ENCODE measurements at regions of chr5 and their contacts with region 1.

Region 1: DNA sequence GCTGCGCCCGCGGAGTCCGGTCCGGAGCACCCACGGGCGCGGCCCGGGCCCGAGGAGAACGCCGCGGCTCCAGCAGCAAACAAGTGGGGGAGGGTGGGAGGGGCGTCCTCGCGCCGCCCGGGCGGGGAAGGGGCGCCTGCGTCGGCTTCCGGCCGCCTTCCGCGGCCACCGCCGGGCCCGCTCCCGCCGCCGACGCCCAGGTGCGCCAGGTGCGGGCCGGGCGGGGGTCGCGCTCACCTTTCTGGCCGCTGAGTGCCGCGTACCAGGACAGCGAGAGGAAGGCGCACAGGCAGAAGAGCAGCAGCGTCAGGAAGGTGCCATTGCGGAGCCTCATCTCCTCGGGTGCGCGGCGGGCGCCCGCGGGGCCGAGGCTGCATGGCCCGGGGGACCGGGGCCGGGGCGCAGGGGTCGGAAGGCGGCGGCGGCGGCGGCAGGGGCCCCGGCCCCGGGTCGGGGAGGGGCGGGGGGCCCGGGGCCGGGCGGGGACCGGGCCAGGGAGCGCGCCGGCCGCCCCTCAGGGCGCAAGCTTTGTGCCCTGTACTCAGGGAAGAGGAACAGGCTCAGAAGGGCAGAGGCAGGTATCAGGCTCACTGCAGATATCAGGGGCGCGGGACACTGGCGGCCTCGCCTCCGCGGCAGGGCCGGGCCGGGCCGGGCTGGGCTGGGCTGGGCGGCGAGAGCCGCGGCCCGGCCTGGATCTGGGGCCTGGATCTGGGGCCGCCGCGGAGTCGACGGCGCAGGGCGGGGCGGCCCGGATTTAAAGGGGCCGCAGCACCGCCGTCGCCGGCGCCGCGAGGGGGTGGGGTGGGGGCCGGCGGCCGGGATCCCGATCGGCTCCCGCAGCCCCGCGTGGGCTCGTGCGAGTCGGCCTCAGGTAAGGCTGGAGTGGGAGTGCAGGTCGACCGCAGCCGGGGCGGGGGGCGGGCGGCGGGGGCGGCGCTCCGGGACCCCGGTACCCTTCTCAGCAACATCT is at the start of gene MGAT4B:
- DNase-seq: peak in 2 of 3 donors; percentile 44 to 50
- H3K4me3 ChIP-seq: peak within 1 kb of the TSS; percentile 56 to 80 (median 59)
- H3K4me3 Mint-ChIP-seq: peak within 1 kb of the TSS; percentile 85 to 88
- H3K27ac ChIP-seq: peak within 1 kb of the TSS; percentile 56 to 77
- H3K27ac Mint-ChIP-seq: peak within 1 kb of the TSS in 6 of 7 donors; percentile 53 to 83 (median 77)
- H3K4me1 ChIP-seq: peaks cover 41 to 61% of the 10 kb centered on the region in 2 donors
- H3K4me1 Mint-ChIP-seq: peaks cover 36% of the 10 kb centered on the region
- H3K27me3 ChIP-seq: no peaks in the 10 kb centered on the region
- H3K27me3 Mint-ChIP-seq: peaks cover 0 to 2% (median 0%) of the 10 kb centered on the region in 3 donors
- CTCF ChIP-seq: no peak
- polyA plus RNA-seq, gene MGAT4B: 12.4 to 151 (median 14.3) TPM

Region 2: GRCh38 chr5:179732417-179732917 is 74.1 kb before region 1 on chr5 and contains the start of gene MAML1:
- intact Hi-C with region 1: no loop called
- DNase-seq: peak; percentile 99 to 100 (median 100)
- H3K4me3 ChIP-seq: peak within 1 kb of the TSS; percentile 69 to 90 (median 70)
- H3K4me3 Mint-ChIP-seq: peak within 1 kb of the TSS; percentile 92 to 96
- H3K27ac ChIP-seq: peak within 1 kb of the TSS; percentile 97 to 98
- H3K27ac Mint-ChIP-seq: peak within 1 kb of the TSS; percentile 95 to 99 (median 97)
- H3K4me1 ChIP-seq: peaks cover 39 to 60% of the 10 kb centered on the region in 2 donors
- H3K4me1 Mint-ChIP-seq: peaks cover 58% of the 10 kb centered on the region
- H3K27me3 ChIP-seq: no peaks in the 10 kb centered on the region
- H3K27me3 Mint-ChIP-seq: no peaks in the 10 kb centered on the region
- CTCF ChIP-seq: no peak
- polyA plus RNA-seq, gene MAML1: 2.2 to 11.0 (median 2.7) TPM

Region 3: DNA sequence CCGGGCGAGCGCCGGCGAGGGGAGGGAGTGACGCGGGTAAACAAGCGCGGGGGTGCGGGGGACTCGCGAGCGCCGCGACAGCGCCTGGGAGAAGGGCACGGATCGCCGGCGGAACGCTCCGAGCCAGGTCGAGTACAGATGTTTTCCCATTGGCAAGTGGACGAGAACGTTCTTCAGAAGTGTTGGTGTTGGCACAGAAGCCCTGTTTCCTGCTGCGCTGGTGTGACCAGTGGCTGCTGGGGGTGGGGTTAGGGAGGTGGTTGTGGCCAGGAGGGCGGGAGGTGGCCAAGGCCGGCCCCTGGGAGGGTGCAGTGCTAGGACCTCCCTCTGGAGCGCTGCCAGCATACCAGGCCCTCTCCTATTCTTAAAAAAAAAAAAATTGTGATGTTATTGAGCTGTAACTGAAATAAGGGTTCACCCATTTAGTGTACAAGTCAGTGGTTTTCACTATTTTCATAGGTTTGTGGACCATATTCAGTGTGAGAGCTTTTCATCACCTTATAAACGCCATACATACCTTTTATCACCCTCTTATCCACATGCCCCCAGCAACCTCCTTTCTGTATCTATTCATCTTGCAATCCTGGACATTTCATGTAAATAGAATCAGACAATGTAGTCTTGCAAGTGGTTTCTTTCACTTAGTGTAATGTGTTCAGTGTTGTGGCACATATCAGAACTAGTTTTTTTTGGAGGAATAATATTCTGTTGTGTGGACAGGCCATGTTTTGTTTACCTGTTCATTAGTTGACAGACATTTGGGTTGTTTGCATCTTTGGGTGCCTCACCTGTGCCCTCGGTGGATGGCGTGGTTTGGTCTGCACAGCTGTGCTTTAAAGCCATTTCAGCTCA is 15.3 kb after region 1 on chr5:
- intact Hi-C with region 1: loop called (anchors 2 kb)
- DNase-seq: peak; percentile 79 to 90 (median 86)
- H3K4me3 ChIP-seq: peak overlapping the region; percentile 87 to 99 (median 87)
- H3K4me3 Mint-ChIP-seq: peak overlapping the region; percentile 93 to 94
- H3K27ac ChIP-seq: peak overlapping the region; percentile 90 to 98
- H3K27ac Mint-ChIP-seq: peak overlapping the region; percentile 96 to 99 (median 98)
- H3K4me1 ChIP-seq: peaks cover 49 to 68% of the 10 kb centered on the region in 2 donors
- H3K4me1 Mint-ChIP-seq: peaks cover 65% of the 10 kb centered on the region
- H3K27me3 ChIP-seq: no peaks in the 10 kb centered on the region
- H3K27me3 Mint-ChIP-seq: peaks cover 6 to 10% (median 7%) of the 10 kb centered on the region in 3 donors
- CTCF ChIP-seq: no peak

Region 4: DNA sequence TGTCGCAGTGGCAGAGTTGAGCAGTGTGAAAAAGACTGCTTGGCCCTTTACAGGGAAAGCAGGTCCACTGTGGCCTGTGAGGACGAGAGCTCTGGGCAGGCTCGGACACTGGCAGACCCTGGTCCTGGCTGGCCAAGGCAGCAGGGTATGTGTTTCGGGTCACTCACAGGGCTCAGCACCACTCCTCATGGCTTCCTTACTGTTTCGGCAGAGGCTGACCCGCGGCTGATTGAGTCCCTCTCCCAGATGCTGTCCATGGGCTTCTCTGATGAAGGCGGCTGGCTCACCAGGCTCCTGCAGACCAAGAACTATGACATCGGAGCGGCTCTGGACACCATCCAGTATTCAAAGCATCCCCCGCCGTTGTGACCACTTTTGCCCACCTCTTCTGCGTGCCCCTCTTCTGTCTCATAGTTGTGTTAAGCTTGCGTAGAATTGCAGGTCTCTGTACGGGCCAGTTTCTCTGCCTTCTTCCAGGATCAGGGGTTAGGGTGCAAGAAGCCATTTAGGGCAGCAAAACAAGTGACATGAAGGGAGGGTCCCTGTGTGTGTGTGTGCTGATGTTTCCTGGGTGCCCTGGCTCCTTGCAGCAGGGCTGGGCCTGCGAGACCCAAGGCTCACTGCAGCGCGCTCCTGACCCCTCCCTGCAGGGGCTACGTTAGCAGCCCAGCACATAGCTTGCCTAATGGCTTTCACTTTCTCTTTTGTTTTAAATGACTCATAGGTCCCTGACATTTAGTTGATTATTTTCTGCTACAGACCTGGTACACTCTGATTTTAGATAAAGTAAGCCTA is 29.9 kb after region 1 on chr5:
- intact Hi-C with region 1: loop called (anchors 5 kb)
- DNase-seq: peak; percentile 57 to 62 (median 57)
- H3K4me3 ChIP-seq: no peak overlapping the region
- H3K4me3 Mint-ChIP-seq: no peak overlapping the region
- H3K27ac ChIP-seq: peak overlapping the region in 1 of 2 donors; percentile 43
- H3K27ac Mint-ChIP-seq: peak overlapping the region; percentile 53 to 81 (median 69)
- H3K4me1 ChIP-seq: peaks cover 0 to 9% of the 10 kb centered on the region in 2 donors
- H3K4me1 Mint-ChIP-seq: peaks cover 13% of the 10 kb centered on the region
- H3K27me3 ChIP-seq: no peaks in the 10 kb centered on the region
- H3K27me3 Mint-ChIP-seq: peaks cover 0 to 2% (median 0%) of the 10 kb centered on the region in 3 donors
- CTCF ChIP-seq: no peak

Region 5: DNA sequence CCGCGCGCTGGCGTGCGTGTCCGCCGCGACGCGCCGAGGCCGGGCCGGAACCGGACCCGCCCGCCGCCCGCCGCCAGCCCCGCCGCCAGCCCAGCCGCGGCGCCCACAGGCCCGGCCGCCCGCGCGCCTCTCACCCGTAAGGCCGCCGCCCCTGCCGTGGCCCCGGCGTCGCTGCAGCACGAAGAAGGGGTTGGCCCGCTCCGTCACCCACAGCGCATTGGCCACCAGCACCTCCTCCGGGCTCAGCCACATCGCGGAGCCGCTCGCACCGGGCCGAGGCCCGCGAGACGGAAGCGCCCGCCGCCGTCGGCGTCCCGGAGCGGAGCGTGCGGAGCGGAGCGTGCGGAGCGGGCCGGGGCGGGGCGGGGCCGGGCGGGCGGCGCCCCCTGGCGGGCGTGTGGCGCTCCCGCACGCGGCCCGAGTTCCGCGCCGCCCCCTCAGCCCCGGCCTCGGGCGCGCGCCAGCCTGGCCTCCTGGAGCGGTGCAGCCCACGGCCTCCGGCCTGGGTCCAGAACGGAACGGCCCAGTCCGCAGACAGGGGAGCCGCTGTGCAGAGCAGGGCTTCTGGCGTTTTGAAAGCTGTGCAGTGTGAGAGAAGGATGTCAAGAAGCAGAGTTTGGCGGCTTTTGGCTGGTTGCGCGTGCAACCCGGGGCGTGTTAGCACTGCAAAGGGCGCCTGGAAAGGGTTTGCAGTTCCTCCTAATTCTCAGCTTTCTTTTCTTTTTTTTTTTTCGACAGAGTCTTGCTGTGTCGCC is 101.2 kb after region 1 on chr5 and contains the start of gene TBC1D9B:
- intact Hi-C with region 1: loop called (anchors 1 to 5 kb)
- DNase-seq: peak; percentile 57 to 77 (median 73)
- H3K4me3 ChIP-seq: peak within 1 kb of the TSS; percentile 42 to 80 (median 56)
- H3K4me3 Mint-ChIP-seq: peak within 1 kb of the TSS; percentile 91 to 95
- H3K27ac ChIP-seq: peak within 1 kb of the TSS; percentile 68 to 86
- H3K27ac Mint-ChIP-seq: peak within 1 kb of the TSS; percentile 85 to 96 (median 90)
- H3K4me1 ChIP-seq: peaks cover 29 to 44% of the 10 kb centered on the region in 2 donors
- H3K4me1 Mint-ChIP-seq: peaks cover 39% of the 10 kb centered on the region
- H3K27me3 ChIP-seq: no peaks in the 10 kb centered on the region
- H3K27me3 Mint-ChIP-seq: no peaks in the 10 kb centered on the region
- CTCF ChIP-seq: no peak
- polyA plus RNA-seq, gene TBC1D9B: 13.4 to 116 (median 26.3) TPM

Region 6: GRCh38 chr5:180135128-180135955 is 328.8 kb after region 1 on chr5:
- intact Hi-C with region 1: no loop called
- DNase-seq: peak; percentile 30 to 52 (median 45)
- H3K4me3 ChIP-seq: no peak overlapping the region
- H3K4me3 Mint-ChIP-seq: peak overlapping the region in 1 of 2 donors; percentile 36
- H3K27ac ChIP-seq: no peak overlapping the region
- H3K27ac Mint-ChIP-seq: peak overlapping the region in 2 of 7 donors; percentile 7 to 50
- H3K4me1 ChIP-seq: peaks cover 3 to 5% of the 10 kb centered on the region in 2 donors
- H3K4me1 Mint-ChIP-seq: peaks cover 10% of the 10 kb centered on the region
- H3K27me3 ChIP-seq: no peaks in the 10 kb centered on the region
- H3K27me3 Mint-ChIP-seq: peaks cover 0 to 10% (median 10%) of the 10 kb centered on the region in 3 donors
- CTCF ChIP-seq: no peak

Measured in CD14-positive monocyte (primary cell).